Posterior vena cava (tissue), 2 donors: ENCODE measurements at regions of chr16 and their contacts with region 1.

Region 1: DNA sequence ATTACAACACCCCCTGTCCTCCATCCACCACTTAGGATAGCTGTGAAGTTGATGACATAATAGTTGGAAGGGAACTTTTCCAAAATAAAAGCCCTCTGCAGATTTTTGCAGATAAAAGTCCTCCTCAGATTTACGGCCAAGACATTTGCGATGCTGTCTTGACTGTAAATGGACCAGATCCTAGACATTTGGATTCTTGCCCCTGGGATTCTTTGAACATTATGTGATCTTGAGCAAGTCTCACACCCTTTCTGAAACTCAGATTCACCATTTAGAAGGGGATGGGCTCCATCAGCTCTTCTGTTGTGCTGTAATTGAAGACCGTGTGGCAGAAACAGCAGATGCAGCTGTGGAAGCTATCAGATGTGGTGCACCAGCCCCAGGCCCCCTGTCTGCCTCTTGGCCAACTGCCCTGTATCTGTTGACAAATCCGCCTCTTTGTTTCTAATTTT is 153.9 kb upstream of the CACNG3 start:
- DNase-seq: no peak

Region 2: DNA sequence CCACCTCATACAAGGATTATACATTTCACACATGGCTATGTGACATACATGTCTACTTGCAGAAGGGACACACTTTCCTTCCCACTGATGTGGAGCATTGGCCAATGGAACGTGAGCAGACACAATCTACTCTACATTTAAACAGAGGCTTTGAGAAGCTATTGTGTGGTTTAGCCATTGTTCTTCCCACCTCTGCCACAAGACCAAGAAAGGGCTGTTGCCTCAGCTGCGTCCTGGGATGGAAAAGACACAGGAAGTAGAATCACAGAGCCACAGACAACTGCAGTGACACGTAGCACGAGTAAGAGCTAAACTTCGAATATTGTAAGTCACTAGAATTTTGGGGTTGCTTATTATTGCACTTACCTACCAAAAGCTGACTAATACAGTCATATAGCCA is 233.2 kb before region 1 on chr16:
- intact Hi-C with region 1: loop called in 1 of 2 experiments (anchors 5 kb)
- DNase-seq: no peak

Region 3: GRCh38 chr16:25434064-25434463 is 1331.8 kb after region 1 on chr16:
- intact Hi-C with region 1: no loop called
- DNase-seq: no peak